ENCODE measurements at regions of chr3 and their contacts with region 1.

Region 1: GRCh38 chr3:50550079-50550741 is 17.3 kb downstream of the C3orf18 start:
- DNase-seq: peak; percentile 86
- H3K4me3 ChIP-seq: no peak overlapping the region; a peak in 1 of 4 replicates
- H3K27ac ChIP-seq: peak overlapping the region in 1 of 2 experiments; percentile 63; a peak in 2 of 4 replicates
- H3K4me1 ChIP-seq: peaks cover 0 to 45% of the 10 kb centered on the region in 2 experiments; a peak in 1 of 4 replicates
- H3K27me3 ChIP-seq: no peaks in the 10 kb centered on the region
- CTCF ChIP-seq: peak; percentile 64
- EP300 ChIP-seq: 0 out of 4 replicates have a peak, but pooled peaks of 1 of the 2 experiments have one; percentile 7
- RAD21 ChIP-seq: peak; percentile 80

Region 2: DNA sequence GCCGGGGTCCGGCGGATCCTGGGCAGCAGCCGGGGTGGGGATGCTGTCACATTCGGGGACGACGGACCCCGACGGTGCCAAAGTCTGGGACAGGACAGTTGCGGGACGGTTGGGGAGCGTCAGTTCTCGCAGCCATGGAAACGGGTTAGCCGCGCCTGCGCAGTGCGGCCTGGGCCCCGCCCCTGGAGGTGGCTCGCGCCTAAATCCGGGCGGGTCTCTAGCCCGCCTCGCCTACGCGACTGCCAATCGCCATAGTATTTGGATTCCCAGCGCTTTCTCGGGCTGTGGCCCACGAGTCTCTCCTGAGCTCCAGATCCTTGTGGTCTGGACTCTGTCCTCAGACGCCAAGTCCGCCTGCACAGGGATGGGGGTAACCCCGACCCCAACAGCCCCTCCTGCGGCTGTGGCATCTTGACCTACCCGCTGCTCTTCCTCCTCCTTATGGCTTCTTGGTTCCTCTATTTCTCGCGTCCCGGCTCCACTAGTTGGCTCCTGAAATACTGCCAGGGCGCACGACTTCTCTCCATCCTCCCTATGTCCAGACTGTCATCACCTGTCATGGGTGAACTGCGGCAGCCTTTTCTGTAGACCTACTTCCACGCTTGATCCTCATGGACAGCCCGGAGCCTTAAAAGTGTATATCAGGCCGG is 204.5 kb before region 1 on chr3 and contains the start of gene ZMYND10:
- CTCF ChIA-PET with region 1: interaction called, 45 read pairs
- POLR2A ChIA-PET with region 1: interaction called, 5 read pairs
- DNase-seq: no peak
- H3K4me3 ChIP-seq: no peak within 1 kb of the TSS
- H3K27ac ChIP-seq: no peak within 1 kb of the TSS
- H3K4me1 ChIP-seq: peaks cover 3 to 32% of the 10 kb centered on the region in 2 experiments; a peak in 1 of 4 replicates
- H3K27me3 ChIP-seq: no peaks in the 10 kb centered on the region
- CTCF ChIP-seq: no peak
- EP300 ChIP-seq: no peak
- RAD21 ChIP-seq: no peak
- polyA plus RNA-seq, gene ZMYND10: 0.83 and 0.95 TPM in 2 replicates

Region 3: GRCh38 chr3:50525987-50526386 is 24.2 kb before region 1 on chr3:
- CTCF ChIA-PET with region 1: interaction called, 16 read pairs
- POLR2A ChIA-PET with region 1: no interaction called
- DNase-seq: no peak
- H3K4me3 ChIP-seq: no peak overlapping the region
- H3K27ac ChIP-seq: no peak overlapping the region; a peak in 1 of 4 replicates
- H3K4me1 ChIP-seq: peaks cover 0 to 28% of the 10 kb centered on the region in 2 experiments; a peak in 1 of 4 replicates
- H3K27me3 ChIP-seq: peaks cover 26% of the 10 kb centered on the region
- CTCF ChIP-seq: no peak
- EP300 ChIP-seq: no peak
- RAD21 ChIP-seq: no peak

Region 4: DNA sequence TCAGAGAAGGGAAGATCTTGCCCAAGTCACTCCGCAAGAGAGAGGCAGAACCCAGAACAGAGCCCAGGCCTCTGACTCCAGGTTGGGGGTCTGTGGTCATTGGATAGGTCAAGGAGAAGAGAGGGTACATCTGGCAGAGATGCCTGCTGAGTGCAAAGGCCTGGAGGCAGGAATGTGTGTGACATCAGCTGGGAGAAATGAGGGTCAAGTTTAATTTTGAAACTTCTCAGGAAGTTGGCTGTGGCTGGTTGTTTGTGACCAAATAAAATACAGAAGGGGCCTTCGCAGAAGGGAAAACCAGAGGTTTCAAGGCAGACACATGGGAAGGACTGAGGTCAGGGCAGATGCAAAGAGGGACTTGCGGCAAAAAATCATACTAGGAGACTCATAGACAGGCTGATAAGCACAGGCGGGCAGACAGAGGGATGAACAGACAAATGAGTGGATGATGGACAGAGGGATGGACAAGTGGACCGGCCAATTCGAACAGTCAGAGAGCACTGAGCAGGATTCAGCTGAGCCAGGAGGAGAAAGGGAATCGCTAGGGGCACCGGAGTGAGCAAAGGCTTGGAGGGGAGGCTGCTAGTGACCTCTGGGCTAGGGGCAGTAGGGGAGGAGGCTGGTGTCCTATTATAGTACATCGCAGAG is 18.0 kb before region 1 on chr3:
- CTCF ChIA-PET with region 1: interaction called, 16 read pairs
- POLR2A ChIA-PET with region 1: no interaction called
- DNase-seq: no peak
- H3K4me3 ChIP-seq: no peak overlapping the region
- H3K27ac ChIP-seq: no peak overlapping the region
- H3K4me1 ChIP-seq: peaks cover 0 to 14% of the 10 kb centered on the region in 2 experiments; a peak in 1 of 4 replicates
- H3K27me3 ChIP-seq: peaks cover 12% of the 10 kb centered on the region
- CTCF ChIP-seq: no peak
- EP300 ChIP-seq: no peak
- RAD21 ChIP-seq: no peak

Region 5: GRCh38 chr3:50815867-50816266 is 265.7 kb after region 1 on chr3:
- CTCF ChIA-PET with region 1: no interaction called
- POLR2A ChIA-PET with region 1: no interaction called
- DNase-seq: no peak
- H3K4me3 ChIP-seq: no peak overlapping the region
- H3K27ac ChIP-seq: no peak overlapping the region
- H3K4me1 ChIP-seq: no peaks in the 10 kb centered on the region
- H3K27me3 ChIP-seq: no peaks in the 10 kb centered on the region
- CTCF ChIP-seq: no peak
- EP300 ChIP-seq: no peak
- RAD21 ChIP-seq: no peak